ENCODE measurements at regions of chr1 and their contacts with region 1.

Region 1: GRCh38 chr1:212994926-212995325 is 20.7 kb downstream of the ANGEL2 start:
- DNase-seq: no peak

Region 2: GRCh38 chr1:212814537-212815334 is 180.2 kb before region 1 on chr1:
- intact Hi-C with region 1: loop called (anchors 1 kb)
- DNase-seq: no peak